Caco-2 (cell line): ENCODE measurements at regions of chr5 and their contacts with region 1.

Region 1: DNA sequence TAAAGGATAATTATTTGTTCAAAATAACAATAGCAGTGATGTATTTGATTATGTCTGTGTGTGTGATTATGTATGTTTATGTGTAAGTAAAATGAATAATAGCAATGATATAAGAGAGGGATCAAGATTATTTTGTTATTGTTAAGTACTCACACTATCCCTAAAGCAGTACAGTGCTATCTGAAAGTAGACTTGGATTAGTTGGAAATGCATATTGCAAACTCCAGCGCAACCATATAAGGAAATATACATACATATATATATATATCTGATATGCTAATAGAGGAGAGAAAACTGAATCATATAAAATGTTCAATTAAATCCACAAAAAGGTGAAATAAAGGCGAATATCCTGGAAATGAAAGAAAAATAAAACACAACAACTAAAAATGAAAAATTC is 268.4 kb downstream of the HINT1 start:
- DNase-seq: no peak
- H3K4me3 ChIP-seq: peak overlapping the region; percentile 52
- H3K4me3 Mint-ChIP-seq: peak overlapping the region; percentile 100
- H3K27ac Mint-ChIP-seq: peak overlapping the region; percentile 99
- H3K4me1 ChIP-seq: peaks cover 11% of the 10 kb centered on the region; the same call in 1 of the 2 replicates
- H3K4me1 Mint-ChIP-seq: peaks cover 16% of the 10 kb centered on the region
- H3K27me3 ChIP-seq: no peaks in the 10 kb centered on the region
- H3K27me3 Mint-ChIP-seq: no peaks in the 10 kb centered on the region
- CTCF ChIP-seq: no peak

Region 2: GRCh38 chr5:130871346-130872086 is 25.1 kb before region 1 on chr5:
- CTCF ChIA-PET with region 1: interaction called, 3 read pairs
- POLR2A ChIA-PET with region 1: no interaction called
- intact Hi-C with region 1: loop called (anchors 1 kb)
- DNase-seq: peak in 1 of 2 experiments; percentile 58
- H3K4me3 ChIP-seq: no peak overlapping the region
- H3K4me3 Mint-ChIP-seq: no peak overlapping the region
- H3K27ac Mint-ChIP-seq: no peak overlapping the region
- H3K4me1 ChIP-seq: peaks cover 7% of the 10 kb centered on the region; the same call in 1 of the 2 replicates
- H3K4me1 Mint-ChIP-seq: peaks cover 15% of the 10 kb centered on the region
- H3K27me3 ChIP-seq: no peaks in the 10 kb centered on the region
- H3K27me3 Mint-ChIP-seq: no peaks in the 10 kb centered on the region
- CTCF ChIP-seq: peak; percentile 70 to 73

Region 3: GRCh38 chr5:130885027-130885426 is 11.6 kb before region 1 on chr5:
- CTCF ChIA-PET with region 1: no interaction called
- POLR2A ChIA-PET with region 1: no interaction called
- intact Hi-C with region 1: loop called (anchors 1 kb)
- DNase-seq: peak; percentile 47 to 59
- H3K4me3 ChIP-seq: no peak overlapping the region
- H3K4me3 Mint-ChIP-seq: no peak overlapping the region
- H3K27ac Mint-ChIP-seq: peak overlapping the region; percentile 83
- H3K4me1 ChIP-seq: peaks cover 29% of the 10 kb centered on the region
- H3K4me1 Mint-ChIP-seq: peaks cover 23% of the 10 kb centered on the region
- H3K27me3 ChIP-seq: no peaks in the 10 kb centered on the region
- H3K27me3 Mint-ChIP-seq: no peaks in the 10 kb centered on the region
- CTCF ChIP-seq: no peak

Region 4: DNA sequence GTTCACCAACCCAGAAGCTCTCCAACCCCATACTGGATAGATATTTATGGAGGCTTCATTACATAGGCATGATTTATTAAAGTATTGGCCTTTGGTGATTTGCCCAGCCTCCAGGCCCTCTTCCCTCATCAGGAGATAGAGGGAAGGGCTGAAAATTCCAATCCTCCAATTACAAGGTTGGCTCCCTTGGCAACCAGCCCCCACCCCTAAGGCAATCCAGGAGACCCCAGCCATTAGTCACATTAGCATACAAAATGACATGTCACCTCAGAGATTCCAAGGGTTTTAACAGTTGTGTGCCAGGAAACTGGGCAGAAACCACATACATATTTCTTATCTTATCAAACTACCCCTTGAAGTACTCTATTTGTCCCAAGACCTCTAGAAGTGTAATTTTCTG is 58.4 kb after region 1 on chr5:
- CTCF ChIA-PET with region 1: no interaction called
- POLR2A ChIA-PET with region 1: no interaction called
- intact Hi-C with region 1: loop called (anchors 1 kb)
- DNase-seq: no peak
- H3K4me3 ChIP-seq: no peak overlapping the region
- H3K4me3 Mint-ChIP-seq: peak overlapping the region; percentile 10
- H3K27ac Mint-ChIP-seq: peak overlapping the region; percentile 51
- H3K4me1 ChIP-seq: peaks cover 21% of the 10 kb centered on the region
- H3K4me1 Mint-ChIP-seq: peaks cover 15% of the 10 kb centered on the region
- H3K27me3 ChIP-seq: no peaks in the 10 kb centered on the region
- H3K27me3 Mint-ChIP-seq: no peaks in the 10 kb centered on the region
- CTCF ChIP-seq: no peak